Esophagus squamous epithelium (tissue), 5 donors: ENCODE measurements at regions of chr20 and their contacts with region 1.

Region 1: GRCh38 chr20:41081276-41081814 is 52.7 kb downstream of the TOP1 start:
- DNase-seq: no peak
- H3K4me3 ChIP-seq: no peak overlapping the region
- H3K27ac ChIP-seq: no peak overlapping the region
- H3K4me1 ChIP-seq: peaks cover 0 to 20% (median 0%) of the 10 kb centered on the region in 3 donors
- H3K27me3 ChIP-seq: no peaks in the 10 kb centered on the region
- CTCF ChIP-seq: no peak
- POLR2A ChIP-seq: no peak

Region 2: GRCh38 chr20:40986774-40987173 is 94.6 kb before region 1 on chr20:
- intact Hi-C with region 1: loop called (anchors 5 kb)
- DNase-seq: no peak
- H3K4me3 ChIP-seq: no peak overlapping the region
- H3K27ac ChIP-seq: no peak overlapping the region
- H3K4me1 ChIP-seq: peaks cover 9 to 20% (median 12%) of the 10 kb centered on the region in 3 donors
- H3K27me3 ChIP-seq: no peaks in the 10 kb centered on the region
- CTCF ChIP-seq: no peak
- POLR2A ChIP-seq: no peak